SK-N-SH (cell line): ENCODE measurements at regions of chr19 and their contacts with region 1.

Region 1: DNA sequence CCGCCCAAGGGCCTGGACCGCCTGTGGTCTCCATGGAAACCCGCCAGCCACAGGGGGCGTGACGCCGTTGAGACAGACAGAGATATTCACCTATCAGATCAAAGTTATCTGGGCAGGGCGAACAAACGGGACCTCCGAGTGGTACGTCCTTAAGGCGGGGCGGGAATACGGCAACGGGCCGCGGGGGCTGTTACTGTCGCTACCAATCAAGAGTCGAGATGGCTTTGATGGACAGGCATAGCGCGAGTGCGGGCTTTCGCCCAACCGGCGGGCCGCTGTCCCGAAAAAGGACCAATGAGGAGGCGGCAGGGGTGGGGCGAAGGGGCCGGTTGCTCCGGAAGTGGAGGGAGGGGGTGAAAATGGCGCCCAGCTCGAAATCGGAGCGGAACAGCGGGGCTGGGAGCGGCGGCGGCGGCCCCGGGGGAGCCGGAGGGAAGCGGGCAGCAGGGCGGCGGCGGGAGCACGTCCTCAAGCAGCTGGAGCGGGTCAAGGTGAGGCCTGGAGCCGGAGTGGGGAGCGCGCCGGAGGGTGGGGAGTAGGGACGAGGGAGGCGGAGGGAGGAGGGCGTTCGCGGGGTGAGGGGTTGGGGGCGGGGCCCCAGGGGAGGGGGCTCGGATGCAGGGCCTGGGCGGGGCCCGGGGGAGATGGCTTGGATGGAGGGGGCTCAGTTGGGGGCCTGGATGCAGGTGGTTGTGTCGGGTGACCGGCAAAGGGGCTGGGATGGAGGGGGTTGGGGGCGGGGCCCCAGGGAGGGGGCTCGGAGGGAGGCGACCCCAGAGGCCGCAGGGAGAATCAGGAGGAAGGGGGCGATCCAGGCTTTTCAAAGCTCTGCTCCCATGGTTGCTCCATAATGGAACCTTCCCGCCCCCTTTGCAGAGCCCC is at the start of gene DCAF15:
- DNase-seq: peak; percentile 99
- H3K4me3 ChIP-seq: peak within 1 kb of the TSS; percentile 61 to 93
- H3K27ac ChIP-seq: peak within 1 kb of the TSS; percentile 54 to 86
- H3K4me1 ChIP-seq: peaks cover 0 to 11% of the 10 kb centered on the region in 2 experiments; a peak in 1 of 4 replicates
- H3K27me3 ChIP-seq: no peaks in the 10 kb centered on the region
- CTCF ChIP-seq: no peak
- EP300 ChIP-seq: no peak
- RAD21 ChIP-seq: no peak; the same call in 1 of the 2 replicates
- polyA plus RNA-seq, gene DCAF15: 36.7 and 55.6 TPM in 2 replicates

Region 2: DNA sequence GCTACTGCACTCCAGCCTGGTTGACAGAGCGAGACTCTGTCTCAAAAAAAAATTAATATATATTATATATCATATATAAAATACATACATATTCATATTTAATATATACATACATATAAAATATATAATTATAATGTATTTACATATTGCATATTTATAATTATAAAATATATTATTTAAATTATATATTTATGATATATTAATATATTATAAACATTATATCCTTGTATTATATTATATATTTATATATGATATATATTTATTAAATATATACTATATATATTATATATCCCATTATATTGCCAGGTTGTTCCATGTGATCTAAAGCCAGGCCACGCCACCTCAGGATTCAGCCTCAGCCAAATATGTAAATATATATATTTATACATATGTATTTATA is 56.2 kb before region 1 on chr19:
- CTCF ChIA-PET with region 1: no interaction called
- POLR2A ChIA-PET with region 1: no interaction called
- DNase-seq: no peak
- H3K4me3 ChIP-seq: no peak overlapping the region
- H3K27ac ChIP-seq: no peak overlapping the region
- H3K4me1 ChIP-seq: no peaks in the 10 kb centered on the region
- H3K27me3 ChIP-seq: no peaks in the 10 kb centered on the region
- CTCF ChIP-seq: no peak
- EP300 ChIP-seq: no peak
- RAD21 ChIP-seq: no peak

Region 3: GRCh38 chr19:13917888-13918406 is 34.4 kb before region 1 on chr19:
- CTCF ChIA-PET with region 1: no interaction called
- POLR2A ChIA-PET with region 1: no interaction called
- DNase-seq: peak; percentile 15
- H3K4me3 ChIP-seq: no peak overlapping the region
- H3K27ac ChIP-seq: no peak overlapping the region
- H3K4me1 ChIP-seq: no peaks in the 10 kb centered on the region
- H3K27me3 ChIP-seq: no peaks in the 10 kb centered on the region
- CTCF ChIP-seq: no peak
- EP300 ChIP-seq: no peak
- RAD21 ChIP-seq: no peak

Region 4: DNA sequence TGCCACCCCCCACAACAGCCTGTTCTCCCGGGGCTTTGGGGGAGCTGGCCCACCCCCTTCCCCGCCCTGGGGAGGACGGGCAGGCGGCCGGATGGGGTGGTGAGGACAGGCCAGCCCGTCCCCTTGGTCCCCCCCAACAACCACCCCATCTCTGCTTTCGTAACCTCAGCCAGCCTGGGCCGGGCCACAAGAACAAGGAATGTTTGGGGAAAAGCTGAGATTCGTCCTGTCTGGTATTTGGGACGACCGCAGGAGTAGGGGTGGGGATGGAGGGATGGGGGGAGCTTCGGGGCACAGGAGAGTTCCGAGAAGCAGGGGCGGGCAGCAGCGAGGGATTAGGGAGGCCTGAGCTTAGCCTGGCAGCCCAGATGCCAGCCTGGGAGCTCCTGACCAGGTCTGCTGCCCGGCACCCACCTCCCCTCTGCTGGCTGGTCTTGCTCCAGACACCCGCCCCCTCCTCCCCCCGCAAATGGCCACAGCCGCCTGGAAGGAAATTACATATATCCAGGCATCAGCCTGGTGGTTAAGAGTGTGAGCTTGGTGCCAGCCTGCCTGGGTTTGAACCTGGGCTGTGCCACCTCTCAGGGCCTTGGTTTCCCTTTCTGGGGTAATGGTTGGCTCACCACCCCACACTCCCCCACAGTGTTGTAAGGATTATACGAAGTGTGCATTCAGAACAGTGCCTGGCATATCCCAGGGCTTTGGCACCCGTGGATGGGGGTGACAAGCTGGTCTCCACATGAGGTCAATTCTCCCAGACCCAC is 13.9 kb before region 1 on chr19 and contains the start of gene PODNL1:
- CTCF ChIA-PET with region 1: interaction called, 5 read pairs
- POLR2A ChIA-PET with region 1: interaction called, 24 read pairs
- DNase-seq: peak; percentile 86
- H3K4me3 ChIP-seq: peak within 1 kb of the TSS; percentile 24 to 57
- H3K27ac ChIP-seq: peak within 1 kb of the TSS; percentile 29 to 86; a peak in 3 of 4 replicates
- H3K4me1 ChIP-seq: peaks cover 0 to 26% of the 10 kb centered on the region in 2 experiments; a peak in 1 of 4 replicates
- H3K27me3 ChIP-seq: no peaks in the 10 kb centered on the region
- CTCF ChIP-seq: no peak
- EP300 ChIP-seq: peak in 1 of 2 experiments; percentile 24; a peak in 1 of 4 replicates
- RAD21 ChIP-seq: peak; percentile 24; the same call in 1 of the 2 replicates
- polyA plus RNA-seq, gene PODNL1: 4.2 and 7.5 TPM in 2 replicates

Region 5: DNA sequence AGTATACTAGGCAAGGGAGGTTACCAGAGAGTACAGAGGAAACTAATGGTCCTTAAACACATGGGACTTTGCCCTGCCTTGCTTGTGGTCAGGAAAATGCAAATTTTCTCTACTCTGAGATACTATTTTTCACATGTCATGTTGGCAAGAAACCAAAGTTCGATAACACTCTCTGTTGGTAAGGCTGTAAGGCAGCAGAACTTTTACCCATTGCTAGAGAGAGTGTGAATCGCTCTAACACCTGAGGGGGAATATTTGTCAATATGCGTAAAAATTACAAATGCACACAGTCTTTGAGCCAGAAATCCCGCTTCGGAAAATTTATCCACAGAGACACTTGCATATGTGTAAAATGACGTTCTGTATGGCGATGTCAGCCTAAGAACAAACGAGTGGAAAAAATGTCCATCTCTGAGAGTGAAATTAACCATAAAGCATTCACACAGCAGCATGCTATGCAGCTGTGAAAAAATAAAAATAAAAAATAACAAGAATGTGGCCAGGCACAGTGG is 63.2 kb after region 1 on chr19:
- CTCF ChIA-PET with region 1: no interaction called
- POLR2A ChIA-PET with region 1: no interaction called
- DNase-seq: no peak
- H3K4me3 ChIP-seq: no peak overlapping the region
- H3K27ac ChIP-seq: no peak overlapping the region
- H3K4me1 ChIP-seq: no peaks in the 10 kb centered on the region
- H3K27me3 ChIP-seq: no peaks in the 10 kb centered on the region
- CTCF ChIP-seq: no peak
- EP300 ChIP-seq: no peak
- RAD21 ChIP-seq: no peak

Region 6: DNA sequence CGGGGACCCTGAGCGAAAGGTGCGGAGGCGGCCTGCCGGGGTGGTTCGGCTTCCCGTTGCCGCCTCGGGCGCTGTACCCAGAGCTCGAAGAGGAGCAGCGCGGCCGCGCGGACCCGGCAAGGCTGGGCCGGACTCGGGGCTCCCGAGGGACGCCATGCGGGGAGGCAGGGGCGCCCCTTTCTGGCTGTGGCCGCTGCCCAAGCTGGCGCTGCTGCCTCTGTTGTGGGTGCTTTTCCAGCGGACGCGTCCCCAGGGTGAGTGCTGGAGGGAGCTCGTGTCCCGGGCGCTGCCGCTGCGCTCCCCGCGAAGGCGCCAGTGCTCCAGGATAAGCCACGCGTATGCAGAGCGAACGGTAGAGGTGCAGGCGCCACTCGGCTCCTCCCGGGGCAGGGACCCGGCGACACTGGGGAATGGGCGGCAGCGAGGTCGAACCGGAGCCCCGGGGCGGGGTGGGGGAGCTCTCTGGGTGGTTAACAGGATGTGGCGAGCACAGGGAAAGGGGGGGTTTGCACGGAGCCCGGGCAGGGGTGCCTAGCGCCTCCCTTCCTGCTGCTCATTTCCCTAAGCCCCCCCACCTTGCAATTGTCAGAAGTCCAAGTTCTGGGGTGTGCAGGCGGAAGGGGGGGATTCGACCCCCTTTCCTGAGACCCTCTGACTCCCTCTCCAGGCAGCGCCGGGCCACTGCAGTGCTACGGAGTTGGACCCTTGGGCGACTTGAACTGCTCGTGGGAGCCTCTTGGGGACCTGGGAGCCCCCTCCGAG is 79.5 kb after region 1 on chr19 and contains the start of gene IL27RA:
- CTCF ChIA-PET with region 1: interaction called, 19 read pairs
- POLR2A ChIA-PET with region 1: no interaction called
- DNase-seq: peak; percentile 87
- H3K4me3 ChIP-seq: peak within 1 kb of the TSS; percentile 60 to 80
- H3K27ac ChIP-seq: peak within 1 kb of the TSS in 1 of 2 experiments; percentile 40; a peak in 3 of 4 replicates
- H3K4me1 ChIP-seq: peaks cover 0 to 3% of the 10 kb centered on the region in 2 experiments; a peak in 1 of 4 replicates
- H3K27me3 ChIP-seq: no peaks in the 10 kb centered on the region
- CTCF ChIP-seq: peak; percentile 70
- EP300 ChIP-seq: no peak
- RAD21 ChIP-seq: peak; percentile 61
- polyA plus RNA-seq, gene IL27RA: 9.3 TPM in 2 replicates